Heart right ventricle (tissue), 16 donors: ENCODE measurements at regions of chr14 and their contacts with region 1.

Region 1: GRCh38 chr14:53144244-53144643 is 8.9 kb downstream of the DDHD1 start:
- DNase-seq: no peak
- ATAC-seq: no peak
- H3K4me3 ChIP-seq: no peak overlapping the region
- H3K27ac ChIP-seq: no peak overlapping the region
- H3K4me1 ChIP-seq: peaks cover 0 to 23% (median 0%) of the 10 kb centered on the region in 9 donors
- H3K27me3 ChIP-seq: no peaks in the 10 kb centered on the region
- CTCF ChIP-seq: no peak

Region 2: GRCh38 chr14:53093206-53093605 is 51.0 kb before region 1 on chr14:
- intact Hi-C with region 1: loop called in 1 of 10 experiments (anchors 2 kb)
- DNase-seq: no peak
- ATAC-seq: no peak
- H3K4me3 ChIP-seq: no peak overlapping the region
- H3K27ac ChIP-seq: no peak overlapping the region
- H3K4me1 ChIP-seq: no peaks in the 10 kb centered on the region
- H3K27me3 ChIP-seq: no peaks in the 10 kb centered on the region
- CTCF ChIP-seq: no peak

Region 3: DNA sequence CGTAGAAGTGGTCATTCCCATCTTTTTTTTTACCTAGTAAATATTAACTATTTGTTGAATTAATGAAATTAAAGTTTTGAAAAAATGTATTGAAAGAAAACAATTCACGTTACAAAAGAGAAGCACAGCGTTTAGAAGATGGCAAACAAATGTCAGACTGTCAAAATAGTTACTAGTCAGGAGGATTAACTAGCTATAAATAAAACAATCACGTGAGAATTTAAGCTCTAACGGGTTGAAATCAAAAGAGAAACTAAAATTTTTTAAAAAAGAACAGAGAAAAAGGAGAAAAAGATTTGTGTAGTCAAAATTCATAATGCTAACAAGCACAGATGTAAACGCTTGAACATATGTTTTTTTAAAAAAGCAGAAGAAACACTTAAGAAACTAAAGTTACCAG is 17.5 kb before region 1 on chr14:
- intact Hi-C with region 1: no loop called
- DNase-seq: no peak
- ATAC-seq: no peak
- H3K4me3 ChIP-seq: peak overlapping the region in 7 of 10 donors; percentile 12 to 35 (median 25)
- H3K27ac ChIP-seq: peak overlapping the region in 5 of 10 donors; percentile 10 to 81 (median 39)
- H3K4me1 ChIP-seq: peaks cover 0 to 16% (median 8%) of the 10 kb centered on the region in 9 donors
- H3K27me3 ChIP-seq: no peaks in the 10 kb centered on the region
- CTCF ChIP-seq: no peak

Region 4: GRCh38 chr14:53217295-53217994 is 73.2 kb after region 1 on chr14:
- intact Hi-C with region 1: no loop called
- DNase-seq: peak; percentile 56 to 73
- ATAC-seq: peak; percentile 93 to 99 (median 97)
- H3K4me3 ChIP-seq: peak overlapping the region; percentile 43 to 77 (median 68)
- H3K27ac ChIP-seq: peak overlapping the region in 7 of 10 donors; percentile 15 to 80 (median 67)
- H3K4me1 ChIP-seq: peaks cover 0 to 10% (median 4%) of the 10 kb centered on the region in 9 donors
- H3K27me3 ChIP-seq: no peaks in the 10 kb centered on the region
- CTCF ChIP-seq: peak; percentile 40 to 71 (median 62)